Dorsolateral prefrontal cortex (tissue), 120 donors: ENCODE measurements at regions of chr20 and their contacts with region 1.

Region 1: DNA sequence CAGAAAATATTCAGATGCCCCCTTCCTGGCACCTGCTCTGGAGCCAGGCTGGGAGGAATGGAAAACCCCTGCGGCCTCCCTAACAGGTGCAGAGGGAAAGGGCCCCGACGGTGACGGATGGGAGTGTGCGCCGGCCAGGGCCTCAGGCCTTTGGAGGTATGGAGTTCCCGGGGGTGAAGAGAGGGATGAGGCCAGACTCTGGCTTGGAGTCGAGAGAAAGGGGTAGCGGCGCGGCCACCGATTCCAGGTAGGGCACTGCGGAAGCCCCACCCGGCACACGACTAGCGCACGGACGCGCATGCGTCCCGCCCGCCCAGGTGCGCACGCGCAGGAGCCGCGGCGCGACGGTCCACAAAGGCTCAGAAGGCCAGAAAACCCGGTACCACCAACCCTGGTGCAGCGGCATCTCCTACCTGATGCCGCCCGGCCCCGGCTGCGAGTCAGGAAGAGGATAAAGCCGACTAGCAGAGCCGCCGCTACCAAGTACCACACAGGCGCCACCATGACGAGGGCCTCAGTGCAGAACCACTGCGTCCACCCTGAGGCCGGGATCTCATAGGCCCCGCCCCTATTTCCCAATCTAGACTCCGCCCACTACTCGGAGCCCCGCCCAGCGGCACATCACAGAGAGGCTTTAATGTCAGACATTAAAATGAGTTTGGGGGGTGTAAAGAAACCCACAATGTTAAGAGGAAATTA is at the start of gene DDRGK1:
- DNase-seq: peak; percentile 80 to 93 (median 89)
- H3K4me3 ChIP-seq: peak within 1 kb of the TSS; percentile 61 to 99 (median 91)
- H3K27ac ChIP-seq: peak within 1 kb of the TSS; percentile 58 to 97 (median 89)
- H3K27me3 ChIP-seq: no peaks in the 10 kb centered on the region
- CTCF ChIP-seq: peak in 19 of 56 donors; percentile 8 to 44 (median 20)
- total RNA-seq, gene DDRGK1: 98.5 to 184 (median 132) TPM

Region 2: DNA sequence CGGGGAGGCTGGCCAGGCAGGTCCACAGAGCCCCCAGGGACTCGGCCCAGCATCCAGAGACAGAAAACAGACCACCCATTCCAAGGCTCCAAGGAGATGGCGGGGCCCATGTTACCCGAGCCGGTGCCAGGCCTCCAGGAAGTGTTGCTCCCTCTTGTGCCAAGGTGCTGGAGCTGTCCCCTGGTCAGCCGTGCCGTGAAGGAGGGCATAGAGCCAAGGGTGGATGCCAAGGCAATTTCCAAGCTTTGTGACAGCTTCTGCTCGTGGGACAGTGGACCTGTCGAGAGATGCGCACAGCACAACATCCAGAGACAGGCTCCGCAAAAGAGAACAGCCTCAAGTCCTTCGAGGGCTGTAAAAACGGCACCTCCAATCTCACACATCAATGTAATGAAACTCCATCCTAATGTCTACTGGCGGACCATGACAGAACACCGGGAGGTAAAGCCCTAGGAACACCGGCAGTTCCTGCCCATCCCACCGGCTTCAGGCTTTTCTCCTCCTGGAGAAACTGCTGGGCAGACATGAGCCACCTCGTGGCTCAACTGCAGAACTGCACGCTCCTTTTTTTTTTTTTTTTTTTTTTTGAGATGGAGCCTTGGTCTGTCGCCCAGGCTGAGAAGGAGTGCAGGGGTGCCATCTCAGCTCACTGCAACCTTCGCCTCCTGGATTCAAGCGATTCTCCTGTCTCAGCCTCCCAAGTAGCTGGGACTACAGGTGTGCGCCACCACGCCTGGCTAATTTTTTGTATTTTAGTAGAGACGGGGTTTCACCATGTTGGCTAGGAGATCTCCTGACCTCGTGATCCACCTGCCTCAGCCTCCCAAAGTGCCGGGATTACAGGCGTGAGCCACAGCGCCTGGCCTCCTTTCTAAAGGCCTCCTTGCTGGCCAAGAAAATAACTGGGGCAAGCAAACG is 88.8 kb before region 1 on chr20:
- intact Hi-C with region 1: loop called in 1 of 2 experiments (anchors 10 kb)
- DNase-seq: peak in 2 of 10 donors; percentile 41 to 65
- H3K4me3 ChIP-seq: peak overlapping the region in 11 of 59 donors; percentile 2 to 34 (median 18)
- H3K27ac ChIP-seq: peak overlapping the region in 13 of 59 donors; percentile 6 to 60 (median 28)
- H3K27me3 ChIP-seq: no peaks in the 10 kb centered on the region
- CTCF ChIP-seq: peak; percentile 67 to 96 (median 79)